ENCODE measurements at regions of chr6 and their contacts with region 1.

Region 1: GRCh38 chr6:166786704-166787293 is 159.7 kb upstream of the RPS6KA2 start:
- DNase-seq: peak; percentile 79
- H3K4me3 ChIP-seq: no peak overlapping the region
- H3K27ac ChIP-seq: no peak overlapping the region
- H3K4me1 ChIP-seq: no peaks in the 10 kb centered on the region
- H3K27me3 ChIP-seq: no peaks in the 10 kb centered on the region
- CTCF ChIP-seq: peak; percentile 79

Region 2: DNA sequence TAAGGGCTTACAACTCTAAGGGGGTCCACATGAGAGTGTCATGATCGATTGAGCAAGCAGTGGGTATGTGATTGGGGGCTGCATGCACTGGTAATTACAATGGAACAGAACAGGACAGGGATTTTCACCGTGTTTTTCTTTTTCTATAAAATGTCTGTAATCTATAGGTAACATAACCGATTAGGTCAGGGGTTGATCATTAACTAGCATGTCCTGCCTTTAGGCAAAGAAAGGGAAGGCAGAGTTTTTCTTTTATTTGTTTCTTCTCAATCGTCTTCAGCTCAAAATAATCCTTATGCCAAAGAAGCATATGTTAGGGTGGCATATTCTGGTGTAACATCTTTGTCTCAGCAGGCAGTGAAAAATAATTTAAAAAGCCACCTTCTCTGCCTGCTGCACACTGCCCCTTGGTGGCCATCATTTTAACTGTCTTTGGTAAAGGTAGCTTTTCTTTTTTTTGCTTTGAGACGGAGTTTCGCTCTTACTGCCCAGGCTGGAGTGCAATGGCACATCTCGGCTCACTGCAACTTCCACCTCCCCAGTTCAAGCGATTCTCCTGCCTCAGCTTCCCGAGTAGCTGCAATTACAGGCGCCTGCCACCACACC is 202.7 kb after region 1 on chr6:
- CTCF ChIA-PET with region 1: interaction called, 4 read pairs
- POLR2A ChIA-PET with region 1: no interaction called
- intact Hi-C with region 1: loop called (anchors 2 kb)
- DNase-seq: peak; percentile 40
- H3K4me3 ChIP-seq: no peak overlapping the region
- H3K27ac ChIP-seq: no peak overlapping the region
- H3K4me1 ChIP-seq: peaks cover 6% of the 10 kb centered on the region
- H3K27me3 ChIP-seq: no peaks in the 10 kb centered on the region
- CTCF ChIP-seq: peak; percentile 45

Region 3: DNA sequence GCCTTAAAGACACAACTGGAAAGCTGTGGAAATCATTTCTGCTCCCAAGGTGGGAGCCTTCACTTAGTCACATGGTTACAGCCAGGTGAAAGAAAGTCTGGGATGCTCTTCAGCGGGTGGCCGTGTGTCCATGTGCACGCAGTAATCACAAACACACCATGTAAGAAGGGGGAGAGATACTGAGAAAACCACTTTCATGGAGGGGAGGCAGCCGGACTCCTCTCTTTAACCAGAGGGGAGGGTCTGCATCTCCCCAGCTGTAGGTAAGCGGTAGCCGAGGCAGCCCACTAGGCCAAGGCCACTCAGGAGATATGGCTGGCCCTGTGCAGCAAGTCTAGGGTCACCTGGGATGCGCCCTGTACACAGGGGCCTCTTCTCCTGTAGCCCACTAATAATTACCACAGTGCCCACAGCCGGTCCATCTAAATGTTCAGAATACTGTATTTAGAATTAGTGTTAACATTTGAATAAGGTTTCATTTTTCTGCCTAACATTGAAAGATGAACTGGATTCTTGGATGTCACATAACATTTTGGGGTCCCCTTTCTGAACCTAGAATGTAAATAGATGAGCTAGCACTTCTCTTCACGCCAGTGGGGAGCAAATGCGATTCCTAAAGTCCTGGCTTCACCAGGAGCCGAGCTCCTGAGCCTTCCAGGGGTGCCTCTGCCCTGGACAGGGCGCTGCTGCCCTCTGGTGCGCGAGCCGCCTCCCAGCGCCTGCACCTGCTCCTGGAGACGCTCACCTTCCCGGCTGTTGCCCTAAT is 355.1 kb after region 1 on chr6:
- CTCF ChIA-PET with region 1: no interaction called
- POLR2A ChIA-PET with region 1: no interaction called
- intact Hi-C with region 1: loop called (anchors 2 kb)
- DNase-seq: peak; percentile 19
- H3K4me3 ChIP-seq: no peak overlapping the region
- H3K27ac ChIP-seq: no peak overlapping the region
- H3K4me1 ChIP-seq: no peaks in the 10 kb centered on the region
- H3K27me3 ChIP-seq: no peaks in the 10 kb centered on the region
- CTCF ChIP-seq: peak; percentile 61